Activated CD4-positive, alpha-beta memory T cell treated with anti-CD3 and anti-CD28 coated beads for 36 hours (primary cell): ENCODE measurements at regions of chr5 and their contacts with region 1.

Region 1: DNA sequence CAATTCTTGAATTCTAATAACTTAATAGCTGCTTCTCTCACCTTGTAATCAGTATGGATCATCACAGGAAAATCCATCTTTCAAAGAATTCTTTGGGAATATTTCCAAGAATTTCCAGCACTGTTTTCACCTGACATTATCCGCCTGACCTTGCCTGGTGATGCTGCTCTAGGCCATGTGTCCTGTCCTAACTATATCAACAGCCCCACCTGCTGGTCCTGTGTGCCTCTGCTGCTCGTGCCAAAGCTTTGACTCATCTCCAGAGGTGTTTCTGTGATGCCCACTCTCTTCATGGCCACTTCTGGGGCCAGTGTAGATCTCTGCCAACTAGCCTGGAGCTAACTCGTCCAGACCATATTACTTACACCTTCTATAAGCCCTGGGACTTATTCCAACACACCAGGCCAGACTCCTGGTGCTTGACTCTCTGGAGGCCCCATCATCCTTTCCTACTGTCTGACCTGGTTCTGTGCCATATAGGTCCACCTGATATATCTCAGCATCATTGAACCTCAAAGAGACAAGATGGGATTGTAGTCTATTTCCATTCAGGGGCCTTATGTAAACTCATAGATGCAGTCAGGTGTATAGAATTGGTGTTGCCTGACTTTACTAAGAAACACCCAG is 67.5 kb upstream of the CKMT2 start:
- DNase-seq: peak; percentile 81
- H3K4me3 Mint-ChIP-seq: no peak overlapping the region
- H3K27ac Mint-ChIP-seq: no peak overlapping the region
- H3K4me1 Mint-ChIP-seq: peaks cover 18% of the 10 kb centered on the region
- H3K27me3 Mint-ChIP-seq: no peaks in the 10 kb centered on the region

Region 2: DNA sequence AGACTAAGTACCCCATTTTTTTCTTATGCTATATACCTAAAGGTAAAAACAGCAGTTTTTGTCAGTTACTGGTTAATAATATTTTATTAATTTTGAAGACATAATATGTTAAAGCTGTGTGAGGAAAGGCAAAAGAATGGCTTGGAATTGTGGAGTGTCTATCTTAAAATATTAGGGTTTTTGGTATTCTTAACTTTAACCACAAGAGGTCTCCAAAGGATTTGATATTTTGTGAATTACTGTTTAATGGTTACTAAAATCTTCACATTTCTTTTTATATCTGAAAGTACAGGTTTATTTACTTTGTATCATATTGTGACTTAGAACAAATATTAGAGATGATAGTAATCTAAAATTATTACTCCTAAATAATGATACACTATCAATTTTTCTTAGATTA is 478.8 kb before region 1 on chr5:
- CTCF ChIA-PET with region 1: interaction called, 34 read pairs
- POLR2A ChIA-PET with region 1: no interaction called
- intact Hi-C with region 1: loop called (anchors 2 kb)
- DNase-seq: no peak
- H3K4me3 Mint-ChIP-seq: no peak overlapping the region
- H3K27ac Mint-ChIP-seq: no peak overlapping the region
- H3K4me1 Mint-ChIP-seq: peaks cover 17% of the 10 kb centered on the region
- H3K27me3 Mint-ChIP-seq: no peaks in the 10 kb centered on the region

Region 3: GRCh38 chr5:80711938-80712337 is 453.7 kb before region 1 on chr5:
- CTCF ChIA-PET with region 1: interaction called, 3 read pairs
- POLR2A ChIA-PET with region 1: no interaction called
- intact Hi-C with region 1: loop called (anchors 1 kb)
- DNase-seq: peak; percentile 24
- H3K4me3 Mint-ChIP-seq: no peak overlapping the region
- H3K27ac Mint-ChIP-seq: no peak overlapping the region
- H3K4me1 Mint-ChIP-seq: peaks cover 19% of the 10 kb centered on the region
- H3K27me3 Mint-ChIP-seq: no peaks in the 10 kb centered on the region

Region 4: DNA sequence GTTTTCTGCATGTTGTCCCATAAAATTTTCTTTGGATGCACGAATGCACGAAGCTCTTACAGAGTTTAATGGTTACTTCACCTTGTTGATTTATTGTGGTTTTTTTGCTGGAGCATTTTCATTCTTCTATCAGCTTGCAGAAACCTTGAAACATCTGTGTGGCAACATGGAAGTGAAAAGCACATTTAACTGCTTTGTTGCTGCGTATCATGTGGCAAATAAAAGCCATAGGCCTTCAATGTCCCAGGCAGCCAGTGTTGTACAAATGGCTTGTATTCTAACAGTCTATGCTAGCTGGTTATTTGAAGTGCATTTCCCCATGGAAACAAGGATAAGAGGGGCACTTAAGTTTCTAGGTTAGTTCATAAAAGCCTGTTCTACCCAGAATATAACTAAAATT is 248.0 kb before region 1 on chr5:
- CTCF ChIA-PET with region 1: no interaction called
- POLR2A ChIA-PET with region 1: no interaction called
- intact Hi-C with region 1: no loop called
- DNase-seq: no peak
- H3K4me3 Mint-ChIP-seq: no peak overlapping the region
- H3K27ac Mint-ChIP-seq: no peak overlapping the region
- H3K4me1 Mint-ChIP-seq: no peaks in the 10 kb centered on the region
- H3K27me3 Mint-ChIP-seq: no peaks in the 10 kb centered on the region

Region 5: DNA sequence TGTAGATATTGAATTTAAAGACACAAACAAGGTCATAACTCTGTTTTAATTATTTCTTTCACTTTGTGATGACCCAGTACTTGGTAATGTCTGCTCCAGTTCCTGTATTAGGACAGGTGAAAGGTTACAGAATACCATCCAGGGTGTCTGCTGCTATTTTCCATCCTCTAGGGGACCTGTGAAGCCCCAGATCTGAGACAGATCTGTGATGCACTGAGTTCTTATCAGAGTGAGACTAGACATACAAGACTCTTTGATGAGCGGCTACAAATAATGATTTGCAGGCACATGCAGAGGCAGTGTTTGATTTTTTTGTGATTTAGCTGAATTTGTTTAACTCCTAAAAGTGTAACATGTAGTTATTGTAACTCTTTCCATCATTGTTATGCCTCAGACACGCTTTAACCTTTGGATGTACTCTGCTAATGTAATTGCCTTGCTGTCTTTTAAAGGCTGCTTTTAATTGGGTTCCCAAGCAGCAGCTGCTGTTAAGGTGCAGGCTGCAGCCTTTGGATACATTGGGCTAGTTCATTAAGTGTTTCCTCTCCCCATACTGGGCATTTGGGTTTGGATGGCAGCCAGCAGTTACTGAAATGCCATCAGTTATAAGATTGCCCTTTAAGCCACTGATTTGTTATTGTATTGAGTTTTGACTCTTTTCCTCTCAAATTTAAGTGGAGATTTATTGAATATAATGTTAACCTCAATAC is 142.2 kb before region 1 on chr5:
- CTCF ChIA-PET with region 1: no interaction called
- POLR2A ChIA-PET with region 1: no interaction called
- intact Hi-C with region 1: no loop called
- DNase-seq: no peak
- H3K4me3 Mint-ChIP-seq: no peak overlapping the region
- H3K27ac Mint-ChIP-seq: no peak overlapping the region
- H3K4me1 Mint-ChIP-seq: peaks cover 66% of the 10 kb centered on the region
- H3K27me3 Mint-ChIP-seq: no peaks in the 10 kb centered on the region